ENCODE measurements at regions of chr16 and their contacts with region 1.

Region 1: GRCh38 chr16:27367461-27368357 is 34.3 kb upstream of the IL21R start:
- DNase-seq: peak; percentile 95
- ATAC-seq: peak; percentile 77
- H3K4me3 ChIP-seq: peak overlapping the region; percentile 11 to 42 (median 30)
- H3K4me3 Mint-ChIP-seq: peak overlapping the region; percentile 78
- H3K27ac ChIP-seq: peak overlapping the region; percentile 97
- H3K27ac Mint-ChIP-seq: peak overlapping the region; percentile 96
- H3K4me1 ChIP-seq: peaks cover 36 to 57% of the 10 kb centered on the region in 2 donors
- H3K4me1 Mint-ChIP-seq: peaks cover 57% of the 10 kb centered on the region
- H3K27me3 ChIP-seq: no peaks in the 10 kb centered on the region
- H3K27me3 Mint-ChIP-seq: no peaks in the 10 kb centered on the region
- CTCF ChIP-seq: peak; percentile 85

Region 2: GRCh38 chr16:27179500-27180072 is 188.1 kb before region 1 on chr16:
- CTCF ChIA-PET with region 1: interaction called, 95 read pairs
- POLR2A ChIA-PET with region 1: interaction called, 4 read pairs
- intact Hi-C with region 1: loop called (anchors 1 kb)
- DNase-seq: peak; percentile 87
- ATAC-seq: peak; percentile 100
- H3K4me3 ChIP-seq: no peak overlapping the region
- H3K4me3 Mint-ChIP-seq: no peak overlapping the region
- H3K27ac ChIP-seq: no peak overlapping the region
- H3K27ac Mint-ChIP-seq: peak overlapping the region; percentile 10
- H3K4me1 ChIP-seq: peaks cover 16 to 26% of the 10 kb centered on the region in 2 donors
- H3K4me1 Mint-ChIP-seq: peaks cover 17% of the 10 kb centered on the region
- H3K27me3 ChIP-seq: no peaks in the 10 kb centered on the region
- H3K27me3 Mint-ChIP-seq: no peaks in the 10 kb centered on the region
- CTCF ChIP-seq: peak; percentile 84

Region 3: DNA sequence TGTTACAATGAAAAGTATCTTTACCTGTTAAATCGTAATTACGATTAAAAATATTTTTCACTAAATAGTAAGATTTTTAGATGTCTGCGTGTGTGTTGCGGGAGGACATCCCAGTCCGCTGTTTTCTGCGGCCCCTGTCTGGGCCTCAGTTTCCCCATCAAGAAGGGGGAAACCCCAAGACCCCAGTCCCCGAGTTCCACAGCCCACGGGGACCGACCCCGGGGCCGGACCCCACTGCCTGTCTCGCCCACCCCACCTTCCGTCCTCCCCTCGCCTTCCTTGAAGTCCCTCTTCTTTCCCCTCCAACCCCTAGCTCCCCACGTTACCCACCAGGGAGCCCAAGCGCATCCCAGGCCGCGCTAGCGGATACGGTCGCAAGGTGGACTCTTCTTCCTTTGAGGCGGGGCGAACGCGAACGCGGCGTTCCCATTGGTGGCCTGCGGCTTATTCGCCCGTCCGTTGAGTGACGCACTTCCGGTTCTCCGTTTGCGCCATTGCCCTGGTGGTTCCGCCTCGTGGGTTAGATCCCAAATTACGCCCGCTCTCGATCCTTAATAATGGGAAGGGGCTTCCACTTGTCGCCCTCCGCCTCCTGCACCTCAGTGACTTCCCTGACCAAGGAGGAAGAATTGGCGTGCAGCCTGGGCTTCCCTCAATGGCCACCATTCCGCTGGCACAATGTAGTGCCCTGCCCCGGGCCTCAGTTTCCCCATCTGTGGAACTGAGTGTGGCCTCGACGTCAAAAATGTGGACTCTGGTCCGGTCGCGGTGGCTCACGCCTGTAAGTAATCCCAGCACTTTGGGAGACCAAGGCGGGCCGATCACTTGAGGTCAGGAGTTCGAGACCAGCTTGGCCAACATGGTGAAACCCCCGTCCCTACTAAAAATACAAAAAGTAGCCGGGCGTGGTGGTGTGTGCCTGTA is 99.1 kb before region 1 on chr16 and contains the start of gene NSMCE1:
- CTCF ChIA-PET with region 1: interaction called, 5 read pairs
- POLR2A ChIA-PET with region 1: interaction called, 5 read pairs
- intact Hi-C with region 1: loop called (anchors 1 kb)
- DNase-seq: peak; percentile 97
- ATAC-seq: peak; percentile 97
- H3K4me3 ChIP-seq: peak within 1 kb of the TSS; percentile 88 to 97 (median 94)
- H3K4me3 Mint-ChIP-seq: peak within 1 kb of the TSS; percentile 99
- H3K27ac ChIP-seq: peak within 1 kb of the TSS; percentile 93 to 99
- H3K27ac Mint-ChIP-seq: peak within 1 kb of the TSS; percentile 99
- H3K4me1 ChIP-seq: peaks cover 59 to 63% of the 10 kb centered on the region in 2 donors
- H3K4me1 Mint-ChIP-seq: peaks cover 71% of the 10 kb centered on the region
- H3K27me3 ChIP-seq: no peaks in the 10 kb centered on the region
- H3K27me3 Mint-ChIP-seq: no peaks in the 10 kb centered on the region
- CTCF ChIP-seq: peak; percentile 11
- total RNA-seq, gene NSMCE1: 56.8 and 61.9 TPM in 2 replicates

Region 4: GRCh38 chr16:27286451-27286850 is 81.3 kb before region 1 on chr16:
- CTCF ChIA-PET with region 1: no interaction called
- POLR2A ChIA-PET with region 1: no interaction called
- intact Hi-C with region 1: no loop called
- DNase-seq: no peak
- ATAC-seq: no peak
- H3K4me3 ChIP-seq: no peak overlapping the region
- H3K4me3 Mint-ChIP-seq: no peak overlapping the region
- H3K27ac ChIP-seq: peak overlapping the region in 1 of 2 donors; percentile 18
- H3K27ac Mint-ChIP-seq: peak overlapping the region; percentile 11
- H3K4me1 ChIP-seq: peaks cover 38% of the 10 kb centered on the region in 2 donors
- H3K4me1 Mint-ChIP-seq: peaks cover 49% of the 10 kb centered on the region
- H3K27me3 ChIP-seq: no peaks in the 10 kb centered on the region
- H3K27me3 Mint-ChIP-seq: no peaks in the 10 kb centered on the region
- CTCF ChIP-seq: no peak

Region 5: DNA sequence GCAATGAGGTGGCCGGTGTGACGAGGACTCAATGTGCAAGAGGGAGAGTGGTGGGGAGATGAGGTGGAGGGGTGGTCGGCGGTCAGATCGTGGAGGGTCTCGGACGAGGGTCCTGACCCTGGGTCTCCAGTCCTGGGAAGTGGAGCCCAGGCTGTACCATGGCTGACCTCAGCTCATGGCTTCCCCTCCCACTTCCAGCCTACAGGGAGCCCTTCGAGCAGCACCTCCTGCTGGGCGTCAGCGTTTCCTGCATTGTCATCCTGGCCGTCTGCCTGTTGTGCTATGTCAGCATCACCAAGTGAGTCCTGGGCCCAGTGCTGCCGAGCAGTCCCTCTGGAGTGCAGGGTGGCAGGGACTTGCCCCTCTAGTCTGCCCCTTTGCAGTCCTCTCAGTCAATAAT is 12.1 kb before region 1 on chr16:
- CTCF ChIA-PET with region 1: interaction called, 12 read pairs
- POLR2A ChIA-PET with region 1: no interaction called
- intact Hi-C with region 1: no loop called
- DNase-seq: peak; percentile 37
- ATAC-seq: peak; percentile 24
- H3K4me3 ChIP-seq: no peak overlapping the region
- H3K4me3 Mint-ChIP-seq: no peak overlapping the region
- H3K27ac ChIP-seq: no peak overlapping the region
- H3K27ac Mint-ChIP-seq: no peak overlapping the region
- H3K4me1 ChIP-seq: no peaks in the 10 kb centered on the region
- H3K4me1 Mint-ChIP-seq: no peaks in the 10 kb centered on the region
- H3K27me3 ChIP-seq: no peaks in the 10 kb centered on the region
- H3K27me3 Mint-ChIP-seq: no peaks in the 10 kb centered on the region
- CTCF ChIP-seq: no peak

Region 6: GRCh38 chr16:27426423-27427408 is 59.0 kb after region 1 on chr16:
- CTCF ChIA-PET with region 1: interaction called, 17 read pairs
- POLR2A ChIA-PET with region 1: no interaction called
- intact Hi-C with region 1: loop called (anchors 1 kb)
- DNase-seq: peak; percentile 89
- ATAC-seq: peak; percentile 94
- H3K4me3 ChIP-seq: no peak overlapping the region
- H3K4me3 Mint-ChIP-seq: peak overlapping the region; percentile 68
- H3K27ac ChIP-seq: peak overlapping the region; percentile 74 to 83
- H3K27ac Mint-ChIP-seq: peak overlapping the region; percentile 91
- H3K4me1 ChIP-seq: peaks cover 62 to 76% of the 10 kb centered on the region in 2 donors
- H3K4me1 Mint-ChIP-seq: peaks cover 68% of the 10 kb centered on the region
- H3K27me3 ChIP-seq: no peaks in the 10 kb centered on the region
- H3K27me3 Mint-ChIP-seq: peaks cover 4% of the 10 kb centered on the region
- CTCF ChIP-seq: no peak

Measured in B cell (primary cell).